HepG2 (cell line): ENCODE measurements at regions of chr2 and their contacts with region 1.

Region 1: GRCh38 chr2:235779444-235779896 is 285.6 kb downstream of the AGAP1 start:
- DNase-seq: peak; percentile 68
- ATAC-seq: peak; percentile 97
- H3K4me3 ChIP-seq: no peak overlapping the region
- H3K27ac ChIP-seq: no peak overlapping the region
- H3K4me1 ChIP-seq: no peaks in the 10 kb centered on the region
- H3K27me3 ChIP-seq: no peaks in the 10 kb centered on the region
- CTCF ChIP-seq: peak; percentile 98
- EP300 ChIP-seq: no peak
- POLR2A ChIP-seq: no peak
- RAD21 ChIP-seq: peak; percentile 87

Region 2: DNA sequence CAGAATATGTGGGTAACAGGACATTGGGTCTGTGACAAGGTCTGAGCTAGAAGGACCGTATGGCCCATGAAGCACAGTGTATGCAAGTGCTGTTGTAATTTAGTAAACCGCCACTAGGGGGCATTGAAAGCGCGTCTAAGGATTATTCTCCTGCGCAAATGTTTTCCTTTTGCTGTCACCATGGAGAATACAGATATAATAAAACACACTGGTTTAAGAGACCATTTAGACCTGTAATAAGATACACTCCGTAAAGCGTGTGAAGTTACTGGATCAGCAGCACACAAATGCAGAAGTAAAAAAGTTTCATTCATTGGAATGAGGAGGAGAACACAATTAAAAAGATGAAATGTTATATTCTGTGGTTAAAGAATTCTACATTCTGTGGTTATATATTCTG is 13.2 kb before region 1 on chr2:
- CTCF ChIA-PET with region 1: no interaction called
- POLR2A ChIA-PET with region 1: no interaction called
- in situ Hi-C with region 1: no loop called
- intact Hi-C with region 1: loop called (anchors 1 kb)
- DNase-seq: peak; percentile 70
- ATAC-seq: peak; percentile 93
- H3K4me3 ChIP-seq: no peak overlapping the region
- H3K27ac ChIP-seq: peak overlapping the region; percentile 9
- H3K4me1 ChIP-seq: peaks cover 18% of the 10 kb centered on the region
- H3K27me3 ChIP-seq: no peaks in the 10 kb centered on the region
- CTCF ChIP-seq: peak; percentile 85
- EP300 ChIP-seq: no peak
- POLR2A ChIP-seq: no peak
- RAD21 ChIP-seq: peak; percentile 60